Adrenal gland (tissue), 19 donors: ENCODE measurements at regions of chr16 and their contacts with region 1.

Region 1: DNA sequence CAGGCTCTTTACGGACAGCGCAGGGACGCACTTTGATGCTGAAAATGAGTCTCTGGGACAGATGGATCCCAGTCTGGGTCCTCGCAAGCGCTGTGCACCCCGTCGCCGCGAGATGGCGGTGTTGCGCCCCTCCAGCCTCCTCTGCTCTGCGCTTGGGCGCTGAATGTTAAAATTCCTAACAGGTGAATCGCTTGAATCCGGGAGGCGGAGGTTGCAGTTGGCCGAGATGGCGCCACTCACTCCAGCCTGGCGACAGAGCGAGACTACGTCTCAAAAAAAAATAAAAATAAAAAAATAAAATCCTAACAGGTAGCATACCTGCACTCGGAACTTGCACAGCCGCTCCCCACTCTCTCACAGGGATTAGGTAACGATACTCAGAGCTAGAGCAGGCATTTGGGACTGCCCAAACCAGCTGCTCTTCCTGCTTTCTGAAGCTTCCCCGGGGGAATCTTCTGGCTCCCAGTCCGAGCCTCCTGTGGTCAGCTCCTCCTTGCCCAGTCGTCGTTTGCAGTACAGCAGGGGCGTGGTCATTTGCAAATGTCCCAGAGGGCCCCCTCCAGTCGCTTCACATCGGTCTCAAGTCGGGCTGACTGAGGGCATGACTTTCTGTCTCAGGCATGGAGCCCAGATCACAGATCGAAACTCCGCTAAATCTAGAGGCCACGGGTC is 26.2 kb upstream of the OSGIN1 start:
- DNase-seq: peak; percentile 76 to 90 (median 83)
- H3K4me3 ChIP-seq: peak overlapping the region in 1 of 4 donors; percentile 10
- H3K27ac ChIP-seq: peak overlapping the region in 2 of 5 donors; percentile 49 to 64
- H3K4me1 ChIP-seq: peaks cover 3 to 5% of the 10 kb centered on the region in 2 donors
- H3K27me3 ChIP-seq: no peaks in the 10 kb centered on the region
- CTCF ChIP-seq: peak; percentile 85 to 98 (median 88)
- POLR2A ChIP-seq: no peak

Region 2: GRCh38 chr16:84055366-84055765 is 128.5 kb after region 1 on chr16:
- intact Hi-C with region 1: loop called in 1 of 2 experiments (anchors 10 kb)
- DNase-seq: peak in 3 of 7 donors; percentile 45 to 62 (median 52)
- H3K4me3 ChIP-seq: no peak overlapping the region
- H3K27ac ChIP-seq: peak overlapping the region; percentile 14 to 84 (median 61)
- H3K4me1 ChIP-seq: peaks cover 15% of the 10 kb centered on the region in 2 donors
- H3K27me3 ChIP-seq: no peaks in the 10 kb centered on the region
- CTCF ChIP-seq: no peak
- POLR2A ChIP-seq: no peak